Activated CD4-positive, alpha-beta T cell treated with anti-CD3 and anti-CD28 coated beads for 36 hours (primary cell): ENCODE measurements at regions of chr18 and their contacts with region 1.

Region 1: DNA sequence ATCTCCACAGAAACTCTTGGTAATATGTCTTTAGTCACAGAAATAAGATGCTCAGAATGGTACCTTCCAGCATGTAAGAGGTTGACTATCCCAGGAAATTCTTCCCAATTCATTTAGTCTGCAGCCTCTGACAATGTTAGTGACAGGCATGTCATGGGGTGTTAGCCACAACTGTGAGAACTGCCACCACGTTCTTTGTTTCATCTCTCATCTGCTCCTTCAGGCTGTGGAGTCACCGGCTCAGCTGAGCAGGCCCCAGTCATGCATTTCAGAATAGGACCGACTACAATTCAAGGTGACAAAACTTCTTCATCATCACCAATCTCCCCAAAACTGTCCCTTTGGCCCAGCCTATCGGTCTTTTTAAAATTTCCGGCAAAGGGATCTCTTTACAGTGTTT is 167.5 kb downstream of the AKAIN1 start:
- DNase-seq: no peak
- ATAC-seq: no peak
- H3K4me3 Mint-ChIP-seq: no peak overlapping the region
- H3K27ac Mint-ChIP-seq: no peak overlapping the region
- H3K4me1 Mint-ChIP-seq: no peaks in the 10 kb centered on the region
- H3K27me3 Mint-ChIP-seq: peaks cover 3% of the 10 kb centered on the region

Region 2: GRCh38 chr18:4605212-4605611 is 424.4 kb before region 1 on chr18:
- CTCF ChIA-PET with region 1: no interaction called
- POLR2A ChIA-PET with region 1: no interaction called
- intact Hi-C with region 1: loop called in 1 of 2 experiments (anchors 10 kb)
- DNase-seq: no peak
- ATAC-seq: no peak
- H3K4me3 Mint-ChIP-seq: no peak overlapping the region
- H3K27ac Mint-ChIP-seq: no peak overlapping the region
- H3K4me1 Mint-ChIP-seq: no peaks in the 10 kb centered on the region
- H3K27me3 Mint-ChIP-seq: no peaks in the 10 kb centered on the region